Lower leg skin (tissue), 4 donors: ENCODE measurements at regions of chr1 and their contacts with region 1.

Region 1: DNA sequence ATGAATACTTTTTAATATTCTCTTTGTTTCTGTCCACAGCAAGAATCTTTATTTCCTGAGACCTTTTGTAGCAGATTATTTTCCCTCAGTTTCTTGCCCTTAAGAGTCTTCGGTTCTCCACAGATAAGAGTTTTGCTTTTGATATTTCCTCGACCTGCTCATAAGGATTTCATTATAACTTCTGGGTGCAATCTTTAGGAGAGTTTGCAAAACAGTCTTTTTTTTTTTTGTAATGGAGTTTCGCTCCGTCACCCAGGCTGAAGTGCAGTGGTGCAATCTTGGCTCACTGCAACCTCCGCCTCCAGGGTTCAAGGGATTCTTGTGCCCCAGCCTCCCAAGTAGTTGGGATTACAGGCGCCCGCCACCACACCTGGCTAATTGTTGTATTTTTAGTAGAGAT is 10.1 kb upstream of the UBE4B start:
- DNase-seq: no peak
- H3K4me3 ChIP-seq: no peak overlapping the region
- CTCF ChIP-seq: no peak
- POLR2A ChIP-seq: no peak

Region 2: DNA sequence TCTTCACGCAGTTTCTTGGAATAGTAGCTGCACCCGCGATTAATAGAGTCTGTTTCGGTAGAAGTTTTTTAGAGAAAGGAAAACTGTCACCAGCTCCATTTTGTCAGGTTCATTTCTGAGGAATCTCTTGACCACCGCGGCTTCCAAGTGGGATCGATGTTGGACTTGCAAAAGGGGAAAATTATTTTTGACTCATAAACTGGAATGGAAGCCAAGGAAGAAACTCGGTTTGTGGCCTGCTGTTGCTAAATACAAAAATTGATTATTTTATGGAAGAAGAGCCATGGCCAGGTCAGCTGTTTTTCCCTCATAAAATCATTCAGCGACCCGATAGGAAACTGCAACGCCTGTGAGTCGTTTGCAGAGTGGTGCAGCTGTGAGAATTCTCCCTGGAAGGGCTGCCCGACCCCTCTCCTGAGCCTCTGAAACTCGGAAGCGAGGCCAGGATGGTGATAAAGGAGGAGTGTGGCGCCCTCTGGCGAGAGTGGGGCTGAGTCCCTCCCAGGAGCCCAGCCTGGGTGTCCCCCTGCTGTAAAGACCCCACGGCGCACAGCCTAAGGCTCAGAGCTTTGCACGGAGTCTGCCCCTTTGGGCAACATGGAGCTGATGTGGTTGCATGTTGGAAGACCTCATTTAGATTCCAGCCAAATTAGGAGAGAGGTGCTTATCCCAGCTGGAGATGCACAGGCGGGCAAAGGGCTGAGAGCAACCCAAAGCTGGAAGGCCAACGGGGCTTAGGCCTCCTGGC is 567.0 kb before region 1 on chr1:
- intact Hi-C with region 1: no loop called
- DNase-seq: no peak
- H3K4me3 ChIP-seq: no peak overlapping the region
- CTCF ChIP-seq: peak in 1 of 3 donors; percentile 61
- POLR2A ChIP-seq: no peak

Region 3: GRCh38 chr1:9957726-9958125 is 64.9 kb before region 1 on chr1:
- intact Hi-C with region 1: loop called (anchors 10 kb)
- DNase-seq: no peak
- H3K4me3 ChIP-seq: no peak overlapping the region
- CTCF ChIP-seq: no peak
- POLR2A ChIP-seq: no peak